Activated B cell treated with CpG ODN at 0.5 μM for 24 hours (primary cell): ENCODE measurements at regions of chr7 and their contacts with region 1.

Region 1: GRCh38 chr7:37786741-37787569 is 61.4 kb upstream of the NME8 start:
- DNase-seq: no peak
- ATAC-seq: peak; percentile 89
- H3K4me3 Mint-ChIP-seq: peak overlapping the region; percentile 74
- H3K27ac Mint-ChIP-seq: peak overlapping the region; percentile 99
- H3K4me1 Mint-ChIP-seq: peaks cover 41% of the 10 kb centered on the region
- H3K27me3 Mint-ChIP-seq: no peaks in the 10 kb centered on the region
- CTCF ChIP-seq: no peak

Region 2: GRCh38 chr7:37510043-37510634 is 276.8 kb before region 1 on chr7:
- CTCF ChIA-PET with region 1: no interaction called
- POLR2A ChIA-PET with region 1: no interaction called
- intact Hi-C with region 1: no loop called
- DNase-seq: no peak
- ATAC-seq: peak; percentile 60
- H3K4me3 Mint-ChIP-seq: no peak overlapping the region
- H3K27ac Mint-ChIP-seq: no peak overlapping the region
- H3K4me1 Mint-ChIP-seq: no peaks in the 10 kb centered on the region
- H3K27me3 Mint-ChIP-seq: peaks cover 14% of the 10 kb centered on the region
- CTCF ChIP-seq: no peak

Region 3: DNA sequence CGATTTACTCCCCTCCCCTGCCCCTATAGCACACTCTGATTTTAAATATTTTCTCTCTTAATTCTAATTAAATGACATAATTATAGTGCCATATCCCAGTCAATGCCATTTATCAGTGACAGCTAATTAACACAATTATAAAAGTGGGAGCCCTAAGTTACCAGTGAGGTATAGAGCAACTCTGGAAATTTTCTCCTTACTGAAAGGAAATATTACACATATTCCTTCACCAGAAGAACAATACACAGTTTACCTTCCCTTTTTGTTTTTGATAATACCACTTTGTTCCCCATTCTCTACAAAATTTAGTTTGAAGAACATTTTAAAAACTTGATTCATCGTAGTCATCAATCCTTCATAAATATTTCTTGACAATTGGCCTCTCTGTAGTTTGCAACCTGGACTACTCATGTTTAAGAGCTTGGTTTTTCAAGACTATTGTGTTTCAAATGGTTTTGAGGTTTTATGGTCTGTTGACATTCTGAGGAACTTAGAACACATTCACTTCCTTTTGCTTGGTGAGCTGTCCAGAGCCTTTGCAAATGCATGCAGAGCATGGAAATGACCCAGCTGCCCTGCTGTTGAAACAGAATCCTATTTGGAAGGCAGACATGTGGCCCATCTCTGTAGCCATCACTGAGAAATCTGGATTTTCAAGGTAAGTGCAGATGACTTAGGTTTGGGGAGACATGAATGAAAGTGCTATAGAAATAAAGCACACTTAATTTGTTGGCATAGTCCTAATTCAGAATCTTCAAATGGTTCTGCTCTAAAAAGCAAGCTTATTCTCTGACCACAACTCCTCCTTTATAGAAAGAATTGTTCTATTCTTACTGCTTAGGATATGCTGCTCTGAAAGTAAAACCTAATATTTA is 103.5 kb before region 1 on chr7 and contains the start of gene GPR141:
- CTCF ChIA-PET with region 1: no interaction called
- POLR2A ChIA-PET with region 1: no interaction called
- intact Hi-C with region 1: loop called (anchors 2 kb)
- DNase-seq: no peak
- ATAC-seq: peak; percentile 86
- H3K4me3 Mint-ChIP-seq: peak within 1 kb of the TSS; percentile 58
- H3K27ac Mint-ChIP-seq: no peak within 1 kb of the TSS
- H3K4me1 Mint-ChIP-seq: peaks cover 35% of the 10 kb centered on the region
- H3K27me3 Mint-ChIP-seq: peaks cover 56% of the 10 kb centered on the region
- CTCF ChIP-seq: no peak
- total RNA-seq, gene GPR141: not detected in 2 replicates

Region 4: DNA sequence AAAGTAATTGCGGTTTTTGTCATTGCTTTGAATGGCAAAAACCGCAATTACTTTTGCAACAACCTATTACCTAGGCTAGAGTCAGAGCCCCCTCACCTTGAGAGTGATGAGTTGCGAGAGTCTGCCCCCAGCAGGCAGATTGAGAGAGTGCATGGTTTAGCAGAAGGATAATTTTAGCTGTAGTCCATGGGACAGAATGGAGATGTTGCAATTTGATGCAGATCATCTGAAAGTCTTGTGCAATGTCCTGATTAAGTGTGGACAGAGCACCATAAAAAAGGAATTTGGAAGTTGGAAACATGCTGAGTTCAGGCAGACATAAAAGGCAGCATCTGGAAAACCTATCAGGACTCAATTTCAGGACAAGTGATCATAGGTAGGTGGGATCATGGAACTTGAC is 54.7 kb before region 1 on chr7:
- CTCF ChIA-PET with region 1: no interaction called
- POLR2A ChIA-PET with region 1: no interaction called
- intact Hi-C with region 1: loop called (anchors 2 kb)
- DNase-seq: no peak
- ATAC-seq: peak; percentile 87
- H3K4me3 Mint-ChIP-seq: no peak overlapping the region
- H3K27ac Mint-ChIP-seq: no peak overlapping the region
- H3K4me1 Mint-ChIP-seq: peaks cover 2% of the 10 kb centered on the region
- H3K27me3 Mint-ChIP-seq: peaks cover 10% of the 10 kb centered on the region
- CTCF ChIP-seq: no peak

Region 5: DNA sequence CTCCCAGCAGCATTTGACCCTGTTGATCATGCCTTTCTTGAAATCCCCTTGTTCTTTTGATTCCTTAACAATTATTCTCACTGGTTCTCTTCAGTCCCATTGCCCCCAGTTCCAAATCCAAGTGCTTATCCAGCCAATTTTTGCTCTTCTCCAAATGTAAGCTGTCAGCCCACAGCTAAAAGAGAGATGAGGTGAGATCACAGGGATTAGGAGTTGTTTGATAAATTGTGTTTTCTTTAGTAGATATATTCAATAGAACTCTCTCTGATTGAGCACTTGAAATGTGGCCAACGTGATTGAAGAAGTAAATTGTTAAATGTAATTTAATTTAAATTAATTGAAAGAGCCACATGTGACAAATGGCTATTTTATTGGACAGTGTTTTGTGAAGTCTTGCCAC is 15.2 kb before region 1 on chr7:
- CTCF ChIA-PET with region 1: no interaction called
- POLR2A ChIA-PET with region 1: no interaction called
- intact Hi-C with region 1: no loop called
- DNase-seq: no peak
- ATAC-seq: no peak
- H3K4me3 Mint-ChIP-seq: no peak overlapping the region
- H3K27ac Mint-ChIP-seq: no peak overlapping the region
- H3K4me1 Mint-ChIP-seq: no peaks in the 10 kb centered on the region
- H3K27me3 Mint-ChIP-seq: no peaks in the 10 kb centered on the region
- CTCF ChIP-seq: no peak